ENCODE measurements at regions of chr19 and their contacts with region 1.

Region 1: GRCh38 chr19:8252922-8253589 is 43.9 kb downstream of the CERS4 start:
- DNase-seq: peak; percentile 59 to 96 (median 84)
- ATAC-seq: peak; percentile 68 to 81 (median 74)
- H3K4me3 ChIP-seq: no peak overlapping the region
- H3K27ac ChIP-seq: no peak overlapping the region
- H3K4me1 ChIP-seq: peaks cover 0 to 5% (median 4%) of the 10 kb centered on the region in 3 donors
- H3K27me3 ChIP-seq: no peaks in the 10 kb centered on the region
- CTCF ChIP-seq: peak; percentile 74 to 88 (median 84)

Region 2: DNA sequence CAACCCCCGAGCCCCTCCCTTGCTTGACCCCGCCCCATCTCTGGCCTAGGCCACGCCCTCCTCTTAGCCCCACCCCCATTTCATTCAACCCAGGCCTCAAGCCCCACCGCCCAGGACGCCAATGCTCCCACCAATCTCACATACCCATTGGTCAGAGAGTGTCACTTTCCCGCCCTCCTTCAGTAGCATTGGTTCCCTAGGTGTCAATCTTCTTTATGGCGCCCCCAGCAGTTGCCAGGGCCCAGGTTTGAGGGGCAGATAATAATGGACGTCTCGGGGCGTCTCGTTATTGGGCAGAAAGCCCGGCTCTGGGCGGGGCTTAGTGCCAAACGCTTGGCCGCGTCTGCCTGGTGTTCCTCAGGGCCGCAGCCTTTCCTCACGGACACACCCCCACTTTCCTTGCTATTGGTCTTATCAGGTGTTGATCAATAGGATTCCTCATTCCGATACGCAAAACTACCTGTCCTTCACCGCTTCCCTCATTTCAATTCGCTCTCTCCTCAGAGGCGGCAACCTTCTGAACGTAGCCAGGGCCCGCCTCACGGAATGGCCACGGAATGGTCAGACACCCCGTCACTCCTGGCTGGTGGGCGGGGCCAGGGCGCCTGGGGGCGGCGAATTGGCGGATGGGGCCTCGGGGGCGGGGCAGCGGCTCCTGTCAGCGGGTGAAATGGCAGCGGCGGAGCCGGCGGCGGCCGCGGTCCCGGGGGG is 423.3 kb before region 1 on chr19 and contains the start of gene EVI5L:
- intact Hi-C with region 1: no loop called
- DNase-seq: peak; percentile 98 to 100 (median 99)
- ATAC-seq: peak; percentile 90 to 95 (median 92)
- H3K4me3 ChIP-seq: peak within 1 kb of the TSS; percentile 42 to 73 (median 58)
- H3K27ac ChIP-seq: no peak within 1 kb of the TSS
- H3K4me1 ChIP-seq: peaks cover 0 to 3% (median 0%) of the 10 kb centered on the region in 3 donors
- H3K27me3 ChIP-seq: no peaks in the 10 kb centered on the region
- CTCF ChIP-seq: no peak
- total RNA-seq, gene EVI5L: 3.0 to 5.2 (median 4.6) TPM

Region 3: GRCh38 chr19:8158411-8159074 is 94.5 kb before region 1 on chr19:
- intact Hi-C with region 1: loop called (anchors 5 to 10 kb)
- DNase-seq: peak in 4 of 6 donors; percentile 40 to 67 (median 64)
- ATAC-seq: peak; percentile 62 to 80 (median 78)
- H3K4me3 ChIP-seq: no peak overlapping the region
- H3K27ac ChIP-seq: no peak overlapping the region
- H3K4me1 ChIP-seq: peaks cover 7 to 8% (median 7%) of the 10 kb centered on the region in 3 donors
- H3K27me3 ChIP-seq: no peaks in the 10 kb centered on the region
- CTCF ChIP-seq: peak; percentile 59 to 77 (median 64)

Region 4: DNA sequence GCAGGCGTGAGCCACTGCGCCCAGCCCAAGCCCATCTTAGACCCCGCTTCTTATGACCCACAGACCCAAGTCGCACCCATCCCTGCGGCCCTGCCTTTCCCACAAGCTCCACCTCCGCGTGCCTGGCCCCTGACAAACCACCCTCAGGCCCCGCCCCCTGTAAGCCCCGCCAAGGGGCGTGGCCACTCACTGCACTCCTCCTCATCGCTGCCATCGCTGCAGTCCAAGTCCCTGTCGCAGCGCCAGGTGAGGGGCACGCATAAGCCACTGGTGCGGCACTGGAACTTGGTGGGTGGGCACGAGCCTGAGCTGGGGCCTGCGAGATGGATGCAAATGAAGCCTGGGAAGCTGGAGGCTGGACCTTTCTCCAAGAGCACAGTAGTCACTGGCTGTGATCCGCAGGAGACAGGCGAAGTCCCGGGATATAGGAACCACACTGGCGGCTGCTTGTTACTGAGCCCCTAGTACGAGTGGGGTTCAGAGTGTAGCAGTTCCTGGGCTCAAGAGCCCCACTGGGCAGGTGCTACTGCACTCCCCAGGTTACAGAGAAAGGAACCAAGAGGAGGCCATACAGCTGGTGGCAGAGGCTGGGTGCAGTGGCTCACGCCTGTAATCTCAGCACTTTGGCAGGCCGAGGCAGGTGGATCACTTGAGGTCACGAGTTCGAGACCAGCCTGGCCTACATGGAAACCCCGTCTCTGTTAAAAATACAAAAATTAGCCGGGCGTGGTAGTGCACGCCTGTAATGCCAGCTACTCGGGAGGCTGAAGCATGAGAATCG is 52.0 kb after region 1 on chr19:
- intact Hi-C with region 1: loop called in 1 of 3 experiments (anchors 5 kb)
- DNase-seq: peak; percentile 0 to 62 (median 37)
- ATAC-seq: no peak
- H3K4me3 ChIP-seq: no peak overlapping the region
- H3K27ac ChIP-seq: no peak overlapping the region
- H3K4me1 ChIP-seq: peaks cover 0 to 6% (median 0%) of the 10 kb centered on the region in 3 donors
- H3K27me3 ChIP-seq: no peaks in the 10 kb centered on the region
- CTCF ChIP-seq: no peak

Measured in pancreas (tissue), 10 donors.